AG04449 (cell line): ENCODE measurements at regions of chr2 and their contacts with region 1.

Region 1: GRCh38 chr2:228657807-228658402 is 476.4 kb upstream of the SPHKAP start:
- DNase-seq: no peak
- H3K4me3 ChIP-seq: no peak overlapping the region
- CTCF ChIP-seq: peak; percentile 32

Region 2: DNA sequence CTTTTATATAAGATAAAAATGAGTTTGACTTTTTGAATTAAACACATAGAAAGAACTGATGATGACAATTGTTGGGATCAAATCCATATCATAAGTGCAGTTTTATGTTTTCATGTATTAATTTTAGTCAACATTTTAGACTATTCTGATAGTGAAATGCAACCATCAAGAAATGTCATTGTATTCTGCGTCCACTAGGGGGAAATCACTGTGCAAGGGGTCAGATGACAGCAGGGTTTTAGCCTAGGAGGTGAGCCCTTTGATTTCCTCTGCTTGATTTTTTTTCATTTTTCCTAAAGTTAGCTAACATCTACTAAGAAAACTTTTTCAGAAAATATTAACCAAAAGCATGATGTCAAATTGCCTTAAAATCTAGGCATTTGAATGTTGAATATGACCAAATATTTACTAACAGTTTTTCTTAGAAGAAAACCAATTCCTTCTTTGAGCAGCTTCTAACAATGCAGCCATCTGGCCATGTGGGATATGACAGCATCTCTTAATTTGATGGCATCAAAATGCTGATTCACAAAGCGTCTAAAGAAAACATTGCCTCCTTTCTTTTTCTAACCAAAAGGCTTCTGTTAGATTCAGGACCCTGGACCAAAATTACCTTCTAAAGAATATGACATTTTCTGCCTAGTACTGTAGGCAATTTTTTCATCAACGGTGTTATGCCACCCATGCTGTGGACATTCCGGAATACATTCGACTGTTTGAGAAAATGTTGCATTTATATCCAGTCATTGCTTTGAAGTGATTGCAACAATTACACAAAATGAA is 618.0 kb before region 1 on chr2:
- CTCF ChIA-PET with region 1: interaction called, 15 read pairs
- POLR2A ChIA-PET with region 1: no interaction called
- DNase-seq: no peak
- H3K4me3 ChIP-seq: no peak overlapping the region
- CTCF ChIP-seq: peak; percentile 13

Region 3: GRCh38 chr2:228048838-228049490 is 608.9 kb before region 1 on chr2:
- CTCF ChIA-PET with region 1: interaction called, 30 read pairs
- POLR2A ChIA-PET with region 1: no interaction called
- DNase-seq: no peak
- H3K4me3 ChIP-seq: no peak overlapping the region
- CTCF ChIP-seq: peak; percentile 21

Region 4: DNA sequence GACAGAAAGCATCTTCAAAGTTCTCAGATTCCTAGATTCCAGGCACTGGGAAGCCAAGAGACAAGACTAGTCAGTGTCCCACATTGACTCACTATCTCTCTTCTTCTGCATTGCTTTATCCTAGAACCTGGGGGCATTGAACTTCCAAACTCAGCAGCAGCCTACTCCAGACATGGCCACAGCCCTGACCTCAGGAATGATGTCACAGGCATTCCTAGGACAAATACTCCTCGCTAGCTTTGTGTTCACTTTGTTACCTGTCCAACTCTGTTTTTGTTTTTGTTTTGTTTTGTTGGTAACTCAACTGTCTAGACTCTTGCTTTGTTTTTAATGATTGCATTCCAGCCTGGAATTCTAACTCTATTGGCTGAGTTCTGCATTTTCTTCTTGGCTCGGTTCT is 27.1 kb before region 1 on chr2:
- CTCF ChIA-PET with region 1: no interaction called
- POLR2A ChIA-PET with region 1: no interaction called
- DNase-seq: no peak
- H3K4me3 ChIP-seq: no peak overlapping the region
- CTCF ChIP-seq: no peak